Activated CD8-positive, alpha-beta T cell treated with anti-CD3 and anti-CD28 coated beads, Interleukin-2, amount 10 ng/mL, durations not matched to agents 7 days and 5 days (primary cell): ENCODE measurements at regions of chr15 and their contacts with region 1.

Region 1: GRCh38 chr15:90660195-90660998 is 56.7 kb upstream of the BLM start:
- DNase-seq: peak; percentile 85
- ATAC-seq: peak; percentile 76
- H3K4me3 Mint-ChIP-seq: peak overlapping the region; percentile 68
- H3K27ac Mint-ChIP-seq: peak overlapping the region; percentile 85
- H3K4me1 Mint-ChIP-seq: peaks cover 88% of the 10 kb centered on the region
- H3K27me3 Mint-ChIP-seq: no peaks in the 10 kb centered on the region

Region 2: DNA sequence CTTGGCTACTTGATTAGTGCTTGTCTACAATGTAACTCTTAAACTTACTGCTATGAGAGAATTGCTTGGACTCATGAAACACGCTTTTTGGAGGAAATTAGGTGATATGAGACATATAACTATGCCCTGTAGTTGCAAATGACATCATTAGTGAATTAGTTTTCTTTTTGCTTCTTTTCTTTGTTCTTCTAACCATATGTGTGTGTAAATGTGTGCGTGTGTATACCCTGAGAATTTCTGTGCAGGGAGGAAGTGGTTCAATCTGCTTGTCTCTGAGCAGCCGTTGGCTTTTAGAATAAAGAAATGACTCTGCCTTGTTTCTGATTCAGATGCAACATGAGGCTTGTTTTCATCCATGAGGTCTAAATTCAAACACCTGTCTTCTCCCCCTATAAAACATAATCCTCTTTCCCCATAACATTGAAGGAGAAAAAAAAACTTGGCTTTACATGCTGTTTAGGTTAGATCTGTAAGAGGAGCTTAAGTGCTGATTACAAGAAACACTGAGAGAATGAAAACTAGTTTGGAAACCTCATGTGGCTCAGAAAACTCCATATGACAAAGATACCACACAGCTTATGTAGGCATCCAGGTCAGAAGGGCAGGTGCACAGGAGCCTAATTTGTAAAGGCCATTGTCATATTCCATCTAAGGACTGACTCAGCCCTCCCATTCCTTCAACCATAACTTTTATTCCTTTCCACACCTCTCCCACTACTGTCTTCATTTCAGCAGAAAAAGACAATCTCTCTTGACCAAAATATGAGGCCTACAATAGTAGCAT is 26.2 kb after region 1 on chr15:
- CTCF ChIA-PET with region 1: interaction called, 6 read pairs
- POLR2A ChIA-PET with region 1: interaction called, 35 read pairs
- DNase-seq: peak; percentile 74
- ATAC-seq: peak; percentile 94
- H3K4me3 Mint-ChIP-seq: peak overlapping the region; percentile 47
- H3K27ac Mint-ChIP-seq: peak overlapping the region; percentile 98
- H3K4me1 Mint-ChIP-seq: peaks cover 60% of the 10 kb centered on the region
- H3K27me3 Mint-ChIP-seq: no peaks in the 10 kb centered on the region